AG04450 (cell line): ENCODE measurements at regions of chr18 and their contacts with region 1.

Region 1: GRCh38 chr18:59996370-59996966 is 96.7 kb downstream of the PMAIP1 start:
- DNase-seq: peak; percentile 23
- H3K4me3 ChIP-seq: no peak overlapping the region
- H3K27ac ChIP-seq: no peak overlapping the region
- H3K27me3 ChIP-seq: peaks cover 3% of the 10 kb centered on the region
- CTCF ChIP-seq: peak; percentile 91

Region 2: GRCh38 chr18:59837586-59837985 is 158.9 kb before region 1 on chr18:
- CTCF ChIA-PET with region 1: interaction called, 10 read pairs
- POLR2A ChIA-PET with region 1: no interaction called
- DNase-seq: no peak
- H3K4me3 ChIP-seq: no peak overlapping the region
- H3K27ac ChIP-seq: no peak overlapping the region
- H3K27me3 ChIP-seq: no peaks in the 10 kb centered on the region
- CTCF ChIP-seq: peak; percentile 94

Region 3: GRCh38 chr18:60007661-60008060 is 11.2 kb after region 1 on chr18:
- CTCF ChIA-PET with region 1: interaction called, 11 read pairs
- POLR2A ChIA-PET with region 1: no interaction called
- DNase-seq: no peak
- H3K4me3 ChIP-seq: no peak overlapping the region
- H3K27ac ChIP-seq: no peak overlapping the region
- H3K27me3 ChIP-seq: peaks cover 3% of the 10 kb centered on the region
- CTCF ChIP-seq: no peak

Region 4: DNA sequence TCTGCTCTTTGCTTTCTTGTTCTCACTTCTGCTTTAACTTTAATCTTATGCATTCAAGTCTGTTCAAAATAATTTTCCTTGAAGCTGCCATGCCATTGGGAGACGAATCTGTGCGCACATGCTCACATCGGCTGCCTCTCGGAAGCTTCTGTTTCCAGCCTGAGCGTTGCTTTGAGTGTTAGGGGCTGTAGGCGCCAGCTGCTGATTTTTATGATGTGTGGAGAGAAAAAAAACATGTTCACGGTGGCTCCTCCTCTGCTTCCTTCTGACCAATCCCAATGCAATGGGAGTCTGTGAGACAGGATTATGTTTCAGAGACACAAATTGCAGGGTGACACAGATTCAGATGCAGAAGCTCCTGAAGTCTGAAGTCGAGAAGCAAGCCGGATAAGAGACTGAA is 376.1 kb after region 1 on chr18 and contains the start of gene MC4R:
- CTCF ChIA-PET with region 1: interaction called, 13 read pairs
- POLR2A ChIA-PET with region 1: no interaction called
- DNase-seq: peak; percentile 58
- H3K4me3 ChIP-seq: peak within 1 kb of the TSS; percentile 43
- H3K27ac ChIP-seq: no peak within 1 kb of the TSS
- H3K27me3 ChIP-seq: peaks cover 6% of the 10 kb centered on the region
- CTCF ChIP-seq: no peak
- polyA plus RNA-seq, gene MC4R: 0.06 TPM in 1 of 2 replicates, not detected in the other

Region 5: GRCh38 chr18:60537074-60537473 is 540.6 kb after region 1 on chr18:
- CTCF ChIA-PET with region 1: interaction called, 12 read pairs
- POLR2A ChIA-PET with region 1: no interaction called
- DNase-seq: no peak
- H3K4me3 ChIP-seq: no peak overlapping the region
- H3K27ac ChIP-seq: no peak overlapping the region
- H3K27me3 ChIP-seq: no peaks in the 10 kb centered on the region
- CTCF ChIP-seq: no peak